Right cardiac atrium (tissue), 5 donors: ENCODE measurements at regions of chr7 and their contacts with region 1.

Region 1: GRCh38 chr7:130668257-130669084 is at the start of gene COPG2:
- DNase-seq: peak; percentile 87 to 95 (median 95)
- ATAC-seq: peak; percentile 99
- H3K4me3 ChIP-seq: peak within 1 kb of the TSS; percentile 53
- H3K27ac ChIP-seq: peak within 1 kb of the TSS; percentile 70
- H3K4me1 ChIP-seq: no peaks in the 10 kb centered on the region
- H3K27me3 ChIP-seq: no peaks in the 10 kb centered on the region
- total RNA-seq, gene COPG2: 14.9 to 18.1 (median 15.6) TPM

Region 2: DNA sequence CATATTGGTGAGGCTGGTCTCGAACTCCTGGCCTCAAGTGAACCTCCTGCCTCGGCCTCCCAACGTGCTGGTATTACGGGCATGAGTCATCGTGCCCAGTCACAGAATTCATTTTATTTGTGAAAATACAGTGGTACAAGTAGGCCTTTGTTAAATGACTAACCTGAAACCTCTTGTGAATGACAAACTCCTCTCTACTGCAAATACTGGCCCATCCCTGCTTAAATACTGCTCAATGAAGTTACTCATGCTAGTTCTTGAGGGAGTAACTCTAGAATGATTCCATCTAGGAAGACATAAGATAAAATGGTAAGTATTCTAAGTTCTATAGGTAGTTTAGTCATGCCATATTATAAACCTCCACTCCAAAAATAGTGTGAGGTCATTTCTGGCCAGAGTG is 796.4 kb before region 1 on chr7:
- intact Hi-C with region 1: no loop called
- DNase-seq: no peak
- ATAC-seq: no peak
- H3K4me3 ChIP-seq: no peak overlapping the region
- H3K27ac ChIP-seq: no peak overlapping the region
- H3K4me1 ChIP-seq: peaks cover 2% of the 10 kb centered on the region
- H3K27me3 ChIP-seq: no peaks in the 10 kb centered on the region

Region 3: DNA sequence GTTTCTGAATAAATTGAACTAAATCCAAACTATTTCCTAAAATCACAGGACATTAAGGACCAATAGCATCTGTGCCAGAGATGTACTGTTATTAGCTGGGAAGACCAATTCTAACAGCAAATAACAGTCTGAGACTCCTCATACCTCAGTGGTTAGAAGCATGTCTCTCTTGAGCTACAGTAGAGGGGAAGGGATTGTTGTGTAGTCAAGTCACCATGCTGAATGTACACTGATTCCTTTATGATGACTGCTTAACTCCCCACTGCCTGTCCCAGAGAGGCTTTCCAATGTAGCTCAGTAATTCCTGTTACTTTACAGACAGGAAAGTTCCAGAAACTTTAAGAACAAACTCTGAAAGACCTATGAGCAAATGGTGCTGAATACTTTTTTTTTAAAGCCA is 162.7 kb before region 1 on chr7:
- intact Hi-C with region 1: loop called in 1 of 4 experiments (anchors 10 kb)
- DNase-seq: no peak
- ATAC-seq: no peak
- H3K4me3 ChIP-seq: no peak overlapping the region
- H3K27ac ChIP-seq: no peak overlapping the region
- H3K4me1 ChIP-seq: no peaks in the 10 kb centered on the region
- H3K27me3 ChIP-seq: no peaks in the 10 kb centered on the region

Region 4: GRCh38 chr7:130865408-130866236 is 197.2 kb after region 1 on chr7:
- intact Hi-C with region 1: no loop called
- DNase-seq: no peak
- ATAC-seq: peak in 1 of 2 donors; percentile 8
- H3K4me3 ChIP-seq: no peak overlapping the region
- H3K27ac ChIP-seq: no peak overlapping the region
- H3K4me1 ChIP-seq: no peaks in the 10 kb centered on the region
- H3K27me3 ChIP-seq: no peaks in the 10 kb centered on the region